ENCODE measurements at regions of chr3 and their contacts with region 1.

Region 1: GRCh38 chr3:189349772-189350171 is 178.0 kb downstream of the TPRG1 start:
- DNase-seq: no peak
- H3K4me3 ChIP-seq: no peak overlapping the region
- H3K27ac ChIP-seq: no peak overlapping the region
- H3K4me1 ChIP-seq: no peaks in the 10 kb centered on the region
- H3K27me3 ChIP-seq: 0 out of 2 replicates have a peak, but pooled peaks cover 3% of the 10 kb centered on the region
- CTCF ChIP-seq: no peak
- EP300 ChIP-seq: no peak
- RAD21 ChIP-seq: no peak

Region 2: GRCh38 chr3:189276481-189277219 is 73.1 kb before region 1 on chr3:
- CTCF ChIA-PET with region 1: no interaction called
- POLR2A ChIA-PET with region 1: interaction called, 11 read pairs
- DNase-seq: no peak
- H3K4me3 ChIP-seq: no peak overlapping the region
- H3K27ac ChIP-seq: no peak overlapping the region
- H3K4me1 ChIP-seq: peaks cover 0 to 14% of the 10 kb centered on the region in 2 experiments; a peak in 1 of 4 replicates
- H3K27me3 ChIP-seq: no peaks in the 10 kb centered on the region
- CTCF ChIP-seq: no peak
- EP300 ChIP-seq: no peak
- RAD21 ChIP-seq: no peak

Region 3: DNA sequence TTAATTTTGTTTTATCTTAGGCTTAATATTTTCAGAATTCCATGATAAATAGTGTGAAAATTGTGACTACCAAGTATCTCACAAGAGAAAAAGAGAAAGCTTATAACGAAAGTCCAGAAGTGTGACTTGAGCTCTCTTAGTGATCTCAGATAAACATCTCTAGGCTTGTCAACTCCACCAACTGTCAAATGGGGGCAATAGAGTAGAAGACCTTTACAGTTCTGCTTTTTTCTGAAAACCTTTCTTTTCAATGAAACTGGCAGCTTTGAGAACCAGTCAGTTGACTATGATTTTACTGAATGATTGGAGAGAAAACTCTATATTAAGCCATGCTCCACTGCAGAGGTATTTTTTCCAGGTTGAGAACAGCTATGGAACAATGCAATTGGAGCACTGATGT is 162.3 kb after region 1 on chr3:
- CTCF ChIA-PET with region 1: no interaction called
- POLR2A ChIA-PET with region 1: no interaction called
- DNase-seq: no peak
- H3K4me3 ChIP-seq: no peak overlapping the region
- H3K27ac ChIP-seq: no peak overlapping the region
- H3K4me1 ChIP-seq: no peaks in the 10 kb centered on the region
- H3K27me3 ChIP-seq: no peaks in the 10 kb centered on the region
- CTCF ChIP-seq: no peak
- EP300 ChIP-seq: no peak
- RAD21 ChIP-seq: no peak

Measured in SK-N-SH (cell line).